Right ventricle myocardium superior (tissue), 1 donor: ENCODE measurements at regions of chr2 and their contacts with region 1.

Region 1: DNA sequence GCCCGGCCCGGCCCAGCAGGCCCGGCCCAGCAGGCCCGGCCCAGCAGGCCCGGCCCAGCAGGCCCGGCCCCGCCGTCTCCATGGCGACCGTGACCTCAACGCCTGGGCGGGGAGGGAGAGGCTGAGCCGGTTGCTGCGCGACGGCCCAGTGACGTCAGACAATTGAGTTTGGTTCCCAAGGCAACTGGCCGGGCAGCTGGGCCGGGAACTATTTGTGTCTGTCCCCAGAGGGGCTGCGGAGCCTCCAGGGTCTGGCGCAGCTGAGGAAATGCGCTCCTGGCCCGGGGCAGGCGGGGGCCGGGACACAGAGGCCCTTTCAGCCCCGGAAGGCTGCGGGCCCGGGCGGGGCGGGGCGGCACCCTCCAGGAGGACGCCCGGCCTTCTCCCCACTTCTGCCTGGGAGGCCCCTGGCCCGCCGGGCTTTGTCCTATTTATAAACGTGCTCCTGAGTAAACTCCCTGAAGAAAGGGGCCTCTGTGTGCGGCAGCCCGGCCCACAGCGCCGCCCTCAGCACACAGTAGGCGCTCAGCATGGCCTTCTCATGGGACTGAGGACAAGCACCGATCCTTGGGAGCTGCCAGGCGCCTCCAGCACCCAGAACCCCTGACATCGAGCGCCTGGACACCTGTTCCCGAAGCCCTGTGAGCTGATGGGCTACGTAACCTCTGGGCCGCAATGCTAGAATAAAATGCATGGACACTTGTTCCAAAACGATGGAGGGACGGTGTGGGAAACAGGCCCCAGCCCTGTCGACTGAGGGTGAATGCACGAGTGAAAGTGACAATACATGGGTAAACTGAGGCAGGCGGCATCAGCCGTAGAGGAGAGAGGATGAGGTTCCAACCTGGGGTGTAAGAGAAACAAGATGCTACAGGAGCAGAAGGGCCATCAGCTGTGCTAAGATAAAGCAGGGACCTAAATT is 12.3 kb downstream of the TEX44 start:
- DNase-seq: peak; percentile 100
- ATAC-seq: peak; percentile 93

Region 2: DNA sequence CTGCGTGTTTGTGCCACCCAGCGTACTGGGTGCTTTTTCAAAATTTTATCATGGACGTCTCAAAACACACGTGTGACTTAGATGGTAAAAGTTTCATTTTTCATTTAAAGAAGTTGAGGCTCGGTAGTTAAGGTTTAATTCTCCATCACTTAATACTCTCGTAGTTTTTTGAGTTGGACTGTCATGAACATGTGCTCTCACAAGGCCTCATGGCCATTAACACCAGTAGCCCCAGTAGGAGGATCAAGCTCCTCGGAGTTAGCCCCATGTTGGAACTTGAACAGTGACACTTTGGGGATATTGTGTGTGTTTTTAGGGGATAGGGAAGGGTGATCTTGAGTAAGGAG is 90.0 kb before region 1 on chr2:
- intact Hi-C with region 1: loop called (anchors 5 kb)
- DNase-seq: no peak
- ATAC-seq: no peak

Region 3: DNA sequence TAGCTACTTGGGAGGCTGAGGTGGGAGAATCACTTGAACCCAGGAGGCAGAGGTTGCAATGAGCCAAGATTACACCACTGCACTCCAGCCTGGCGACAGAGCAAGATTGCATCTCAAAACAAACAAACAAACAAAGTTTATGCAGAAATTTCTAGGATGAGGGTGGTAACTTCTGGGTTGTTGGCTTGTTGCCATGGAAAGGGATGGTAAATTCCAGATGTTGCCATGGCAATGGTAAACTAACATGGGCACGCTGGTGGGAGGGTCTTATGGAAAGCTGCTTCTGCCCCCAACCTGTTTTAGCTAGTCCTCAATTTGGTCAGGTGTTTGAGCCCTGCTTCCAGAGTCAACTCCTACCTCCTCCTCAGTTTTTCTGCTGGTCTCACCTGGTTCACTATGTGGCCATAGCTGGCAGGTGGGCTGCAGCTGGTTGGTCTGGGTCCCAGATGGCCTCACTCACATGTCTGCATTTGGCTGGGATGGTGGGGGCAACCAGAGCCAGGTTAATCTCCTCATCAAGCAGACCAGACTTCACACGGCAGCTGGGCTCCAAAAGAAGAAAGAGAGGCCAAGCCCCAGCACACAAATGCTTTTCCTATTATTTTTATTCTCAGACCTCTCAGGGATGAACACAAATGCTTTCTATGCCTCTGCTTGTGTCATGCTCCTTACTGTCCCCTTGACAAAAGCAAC is 38.9 kb before region 1 on chr2:
- intact Hi-C with region 1: loop called (anchors 2 kb)
- DNase-seq: no peak
- ATAC-seq: no peak